ENCODE measurements at regions of chr4 and their contacts with region 1.

Region 1: DNA sequence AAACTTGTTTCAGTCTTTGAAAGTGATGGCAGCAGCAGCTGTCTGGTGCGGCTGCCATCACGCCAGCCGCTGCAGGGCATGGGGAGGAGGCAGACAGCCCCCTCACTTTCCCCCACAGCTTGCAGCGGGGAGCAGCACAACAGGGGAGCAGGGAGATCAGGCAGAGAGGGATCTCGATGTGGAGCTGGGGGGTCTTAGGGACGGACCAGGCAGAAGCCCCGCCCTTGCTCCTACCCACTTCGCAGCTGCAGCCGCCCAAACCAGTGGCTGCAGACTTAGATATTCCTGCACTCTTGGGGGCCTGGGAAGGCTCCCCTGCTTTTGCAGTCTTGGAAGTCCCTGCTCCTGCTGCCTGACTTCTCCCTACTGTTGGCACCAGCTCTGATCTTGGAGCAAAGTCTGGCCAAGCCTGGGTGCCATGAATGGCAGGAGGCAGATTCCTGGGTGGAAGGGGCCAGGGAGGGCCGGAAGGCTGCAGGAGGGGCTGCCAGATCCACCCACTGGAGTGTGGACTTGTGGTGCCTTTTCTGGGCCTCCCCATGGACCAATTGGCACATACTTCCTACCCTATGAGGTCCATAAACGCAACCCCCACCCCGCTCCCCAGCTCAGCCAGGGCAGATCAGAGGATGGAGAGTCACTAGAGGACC is 14.0 kb upstream of the MFAP3L start:
- DNase-seq: no peak
- ATAC-seq: no peak

Region 2: DNA sequence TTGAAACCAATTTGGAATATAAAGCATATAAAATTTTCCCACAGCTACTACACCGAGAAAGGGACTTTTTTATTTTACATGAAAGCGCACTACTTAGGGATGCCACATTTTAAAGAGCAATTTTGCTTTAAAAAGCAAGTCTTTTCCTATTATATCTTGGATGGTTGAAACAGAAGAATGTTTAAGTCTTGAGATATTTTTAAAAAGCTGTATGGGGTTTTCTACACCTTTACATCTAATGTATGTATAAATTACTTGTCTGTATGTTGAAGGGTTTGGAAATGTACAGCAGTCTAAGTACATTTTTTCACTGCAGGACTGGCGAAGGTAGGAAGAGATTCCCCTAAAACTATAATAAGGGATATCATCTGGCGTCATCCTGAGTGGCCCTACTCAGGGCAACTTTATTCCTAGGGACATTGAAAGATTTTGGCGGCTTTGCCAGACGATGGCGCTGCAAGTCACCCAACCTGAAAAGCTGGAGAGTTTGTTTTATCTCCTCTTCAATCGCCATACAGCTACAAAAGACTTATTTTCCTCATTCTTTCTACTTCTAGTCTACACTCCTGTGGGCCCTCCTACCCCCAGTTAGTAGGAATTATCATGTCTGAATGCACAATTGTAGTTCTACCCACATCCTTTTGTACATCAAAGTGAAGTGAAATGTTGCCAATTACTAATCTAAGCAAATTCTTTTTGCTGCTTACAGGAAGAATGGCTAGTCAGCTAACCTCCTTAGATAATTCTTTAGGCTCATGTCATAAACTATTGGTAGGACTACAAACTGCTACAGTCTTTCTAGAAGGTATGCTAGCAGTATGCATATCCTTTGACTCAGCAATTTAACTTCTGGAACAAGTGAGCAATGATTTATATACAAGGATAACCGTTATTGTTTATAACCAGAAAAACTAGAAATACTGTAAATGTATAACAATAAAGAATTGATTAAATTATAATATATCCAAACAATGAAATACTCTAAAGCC is 427.0 kb before region 1 on chr4:
- intact Hi-C with region 1: loop called in 1 of 2 experiments (anchors 5 kb)
- DNase-seq: peak; percentile 74
- ATAC-seq: peak; percentile 64

Region 3: GRCh38 chr4:170102426-170102825 is 62.3 kb after region 1 on chr4:
- intact Hi-C with region 1: no loop called
- DNase-seq: no peak
- ATAC-seq: no peak

Measured in left cardiac atrium (tissue), 4 donors.